Transverse colon (tissue), 4 donors: ENCODE measurements at regions of chr15 and their contacts with region 1.

Region 1: DNA sequence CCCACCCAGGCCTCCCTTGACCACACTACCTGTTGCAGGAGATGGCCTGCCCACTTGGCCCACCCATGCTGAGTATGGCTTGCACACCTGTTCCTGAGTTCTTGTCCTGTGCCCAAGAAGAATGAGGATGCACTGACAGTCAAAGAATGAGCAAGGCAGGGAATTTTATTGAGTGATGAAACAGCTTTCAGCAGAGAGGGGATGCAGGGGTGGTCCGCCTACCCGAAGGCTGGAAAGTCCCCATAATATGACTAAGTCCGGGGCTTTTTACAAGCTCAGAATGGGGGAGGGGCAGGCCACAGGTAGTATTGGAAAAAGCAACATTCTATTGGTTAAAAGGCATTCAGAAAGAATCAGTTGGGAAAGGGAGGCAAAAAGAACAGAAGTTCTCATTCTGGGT is 29.9 kb upstream of the RNU6-1 start:
- DNase-seq: no peak
- H3K4me3 ChIP-seq: no peak overlapping the region
- H3K27ac ChIP-seq: no peak overlapping the region
- H3K4me1 ChIP-seq: no peaks in the 10 kb centered on the region
- H3K27me3 ChIP-seq: no peaks in the 10 kb centered on the region
- CTCF ChIP-seq: no peak
- EP300 ChIP-seq: no peak
- POLR2A ChIP-seq: no peak

Region 2: DNA sequence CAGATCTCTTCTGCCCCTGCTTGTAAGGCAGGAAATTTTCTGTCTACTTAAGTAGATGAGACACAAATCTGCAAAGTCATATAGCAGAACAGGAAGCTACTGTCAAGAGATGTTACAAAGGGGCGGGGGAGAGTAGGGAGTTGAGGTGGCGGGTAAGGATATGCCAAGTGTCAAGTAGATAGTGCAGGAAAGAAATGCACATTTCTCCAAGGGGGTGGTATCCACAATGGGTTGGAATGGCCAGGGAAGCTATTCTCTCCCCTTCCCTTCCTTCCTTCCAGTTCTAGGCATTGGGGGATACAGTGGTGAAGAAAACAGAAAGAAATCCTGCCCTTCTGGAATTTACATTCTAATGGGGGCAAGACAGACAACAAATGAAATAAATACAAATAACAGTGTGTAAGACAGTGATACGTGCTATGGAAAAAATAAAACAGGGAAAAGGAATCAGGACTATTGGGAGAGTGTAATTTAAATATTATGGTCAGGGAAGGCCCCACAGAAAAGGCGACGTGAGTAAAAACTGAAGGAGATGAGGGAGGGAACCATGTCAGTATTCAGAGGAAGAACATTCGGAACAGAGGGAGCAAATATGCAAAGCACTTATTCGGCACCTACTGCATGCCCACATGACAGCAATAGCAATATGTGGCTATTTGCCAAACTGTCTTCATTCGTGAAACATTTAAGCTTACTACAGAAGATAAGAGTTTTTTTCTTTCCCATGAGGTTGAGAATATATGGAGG is 13.0 kb after region 1 on chr15:
- in situ Hi-C with region 1: no loop called
- intact Hi-C with region 1: loop called (anchors 1 kb)
- DNase-seq: no peak
- H3K4me3 ChIP-seq: no peak overlapping the region
- H3K27ac ChIP-seq: peak overlapping the region; percentile 4 to 87 (median 79)
- H3K4me1 ChIP-seq: peaks cover 0 to 28% (median 15%) of the 10 kb centered on the region in 4 donors
- H3K27me3 ChIP-seq: no peaks in the 10 kb centered on the region
- CTCF ChIP-seq: no peak
- EP300 ChIP-seq: no peak
- POLR2A ChIP-seq: no peak